Activated naive CD8-positive, alpha-beta T cell treated with anti-CD3 and anti-CD28 coated beads, Interleukin-2, amount 10 ng/mL, durations not matched to agents 7 days and 5 days (primary cell): ENCODE measurements at regions of chr17 and their contacts with region 1.

Region 1: DNA sequence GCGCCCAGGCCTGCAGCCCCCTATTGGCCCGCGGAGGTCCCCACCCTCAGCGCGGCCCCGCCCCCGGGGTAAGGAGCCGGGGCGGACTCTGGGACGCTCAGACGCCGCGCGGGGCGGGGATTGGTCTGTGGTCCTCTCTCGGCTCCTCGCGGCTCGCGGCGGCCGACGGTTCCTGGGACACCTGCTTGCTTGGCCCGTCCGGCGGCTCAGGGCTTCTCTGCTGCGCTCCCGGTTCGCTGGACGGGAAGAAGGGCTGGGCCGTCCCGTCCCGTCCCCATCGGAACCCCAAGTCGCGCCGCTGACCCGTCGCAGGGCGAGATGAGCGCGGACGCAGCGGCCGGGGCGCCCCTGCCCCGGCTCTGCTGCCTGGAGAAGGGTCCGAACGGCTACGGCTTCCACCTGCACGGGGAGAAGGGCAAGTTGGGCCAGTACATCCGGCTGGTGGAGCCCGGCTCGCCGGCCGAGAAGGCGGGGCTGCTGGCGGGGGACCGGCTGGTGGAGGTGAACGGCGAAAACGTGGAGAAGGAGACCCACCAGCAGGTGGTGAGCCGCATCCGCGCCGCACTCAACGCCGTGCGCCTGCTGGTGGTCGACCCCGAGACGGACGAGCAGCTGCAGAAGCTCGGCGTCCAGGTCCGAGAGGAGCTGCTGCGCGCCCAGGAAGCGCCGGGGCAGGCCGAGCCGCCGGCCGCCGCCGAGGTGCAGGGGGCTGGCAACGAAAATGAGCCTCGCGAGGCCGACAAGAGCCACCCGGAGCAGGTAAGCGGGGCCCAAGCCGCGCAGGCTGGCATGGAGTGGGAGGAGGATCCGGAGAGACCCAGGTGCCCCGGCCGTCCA is at the start of gene NHERF1:
- DNase-seq: peak; percentile 99
- ATAC-seq: peak; percentile 85
- H3K4me3 Mint-ChIP-seq: peak within 1 kb of the TSS; percentile 93
- H3K27ac Mint-ChIP-seq: peak within 1 kb of the TSS; percentile 77
- H3K4me1 Mint-ChIP-seq: peaks cover 56% of the 10 kb centered on the region
- H3K27me3 Mint-ChIP-seq: no peaks in the 10 kb centered on the region
- total RNA-seq, gene NHERF1: 241 to 244 TPM

Region 2: DNA sequence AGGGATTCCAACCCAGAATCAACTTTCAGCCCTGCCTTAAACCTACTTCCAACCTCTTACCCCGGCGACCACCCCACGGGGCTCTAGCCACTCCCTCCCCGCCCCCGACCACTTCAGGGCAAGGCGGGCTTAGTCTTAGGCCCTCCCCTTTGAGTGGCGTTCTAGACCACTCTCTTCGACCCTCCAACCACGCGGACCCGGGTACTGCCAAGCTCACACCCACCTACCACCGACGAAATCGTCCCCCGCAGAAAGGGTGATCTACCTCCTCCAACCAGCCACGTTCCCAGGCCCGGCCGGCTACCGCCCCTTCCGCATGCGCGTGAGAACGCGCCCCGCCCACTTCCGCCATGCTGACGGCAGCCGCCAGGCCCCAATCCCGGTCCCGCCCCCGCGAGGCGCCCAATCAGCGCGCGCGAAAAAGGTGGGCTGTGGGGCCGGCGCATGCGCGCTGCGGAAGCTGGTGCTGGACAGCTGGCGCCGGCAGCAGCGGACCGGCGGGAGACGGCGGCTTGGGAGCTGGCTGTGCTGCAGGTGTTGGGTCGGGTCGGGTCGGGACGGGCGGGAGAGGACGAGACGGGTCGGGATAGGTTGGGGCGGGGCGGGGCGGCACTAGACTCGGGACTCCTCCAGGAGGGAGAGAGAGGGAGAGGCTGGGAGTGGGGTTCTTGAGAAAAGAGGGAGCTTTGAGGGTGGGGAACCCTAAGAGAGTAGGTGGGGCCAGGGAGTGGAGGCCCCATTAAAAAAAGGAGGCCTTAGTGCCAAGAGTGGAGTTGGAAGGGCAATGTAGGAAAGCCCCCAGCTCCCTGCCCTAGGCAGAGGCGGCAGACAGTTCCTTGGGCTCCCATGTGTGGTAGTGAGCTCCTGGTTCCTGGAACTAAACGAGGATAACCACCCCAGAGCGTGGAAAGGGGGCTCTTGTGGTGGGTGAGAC is 27.6 kb after region 1 on chr17 and contains the start of gene NAT9:
- POLR2A ChIA-PET with region 1: interaction called, 38 read pairs
- DNase-seq: peak; percentile 100
- ATAC-seq: peak; percentile 77
- H3K4me3 Mint-ChIP-seq: peak within 1 kb of the TSS; percentile 99
- H3K27ac Mint-ChIP-seq: peak within 1 kb of the TSS; percentile 94
- H3K4me1 Mint-ChIP-seq: peaks cover 53% of the 10 kb centered on the region
- H3K27me3 Mint-ChIP-seq: no peaks in the 10 kb centered on the region
- total RNA-seq, gene NAT9: 37.6 to 42.1 TPM